ENCODE measurements at regions of chr1 and their contacts with region 1.

Region 1: GRCh38 chr1:63746129-63746864 is 27.5 kb upstream of the ROR1 start:
- DNase-seq: no peak
- H3K4me3 ChIP-seq: no peak overlapping the region
- H3K27ac ChIP-seq: no peak overlapping the region
- H3K4me1 ChIP-seq: no peaks in the 10 kb centered on the region
- H3K27me3 ChIP-seq: no peaks in the 10 kb centered on the region
- CTCF ChIP-seq: no peak
- POLR2A ChIP-seq: no peak

Region 2: GRCh38 chr1:64811131-64811530 is 1064.8 kb after region 1 on chr1:
- intact Hi-C with region 1: loop called (anchors 10 kb)
- DNase-seq: no peak
- H3K4me3 ChIP-seq: no peak overlapping the region
- H3K27ac ChIP-seq: no peak overlapping the region
- H3K4me1 ChIP-seq: no peaks in the 10 kb centered on the region
- H3K27me3 ChIP-seq: no peaks in the 10 kb centered on the region
- CTCF ChIP-seq: no peak
- POLR2A ChIP-seq: no peak

Region 3: GRCh38 chr1:64882574-64883255 is 1136.4 kb after region 1 on chr1:
- intact Hi-C with region 1: no loop called
- DNase-seq: no peak
- H3K4me3 ChIP-seq: no peak overlapping the region
- H3K27ac ChIP-seq: no peak overlapping the region
- H3K4me1 ChIP-seq: no peaks in the 10 kb centered on the region
- H3K27me3 ChIP-seq: no peaks in the 10 kb centered on the region
- CTCF ChIP-seq: no peak
- POLR2A ChIP-seq: no peak

Measured in breast epithelium (tissue), 4 donors.